CD14-positive monocyte (primary cell): ENCODE measurements at regions of chr4 and their contacts with region 1.

Region 1: GRCh38 chr4:165207431-165208220 is at the start of gene KLHL2:
- DNase-seq: peak; percentile 84 to 89 (median 88)
- H3K4me3 ChIP-seq: peak within 1 kb of the TSS; percentile 75 to 99 (median 91)
- H3K4me3 Mint-ChIP-seq: peak within 1 kb of the TSS; percentile 92 to 93
- H3K27ac ChIP-seq: peak within 1 kb of the TSS; percentile 56 to 89
- H3K27ac Mint-ChIP-seq: peak within 1 kb of the TSS; percentile 89 to 95 (median 93)
- H3K4me1 ChIP-seq: peaks cover 55 to 62% of the 10 kb centered on the region in 2 donors
- H3K4me1 Mint-ChIP-seq: peaks cover 66% of the 10 kb centered on the region
- H3K27me3 ChIP-seq: no peaks in the 10 kb centered on the region
- H3K27me3 Mint-ChIP-seq: peaks cover 0 to 6% (median 0%) of the 10 kb centered on the region in 3 donors
- CTCF ChIP-seq: no peak
- polyA plus RNA-seq, gene KLHL2: 6.9 to 22.6 (median 11.1) TPM

Region 2: GRCh38 chr4:165112368-165113139 is 95.1 kb before region 1 on chr4 and contains the start of gene TMEM192:
- intact Hi-C with region 1: loop called in 1 of 2 experiments (anchors 5 kb)
- DNase-seq: peak; percentile 74 to 85 (median 82)
- H3K4me3 ChIP-seq: peak within 1 kb of the TSS; percentile 74 to 96 (median 82)
- H3K4me3 Mint-ChIP-seq: peak within 1 kb of the TSS; percentile 93 to 98
- H3K27ac ChIP-seq: peak within 1 kb of the TSS; percentile 69 to 90
- H3K27ac Mint-ChIP-seq: peak within 1 kb of the TSS; percentile 88 to 98 (median 96)
- H3K4me1 ChIP-seq: peaks cover 10 to 18% of the 10 kb centered on the region in 2 donors
- H3K4me1 Mint-ChIP-seq: peaks cover 16% of the 10 kb centered on the region
- H3K27me3 ChIP-seq: no peaks in the 10 kb centered on the region
- H3K27me3 Mint-ChIP-seq: peaks cover 0 to 4% (median 0%) of the 10 kb centered on the region in 3 donors
- CTCF ChIP-seq: no peak
- polyA plus RNA-seq, gene TMEM192: 7.3 to 22.4 (median 15.5) TPM

Region 3: DNA sequence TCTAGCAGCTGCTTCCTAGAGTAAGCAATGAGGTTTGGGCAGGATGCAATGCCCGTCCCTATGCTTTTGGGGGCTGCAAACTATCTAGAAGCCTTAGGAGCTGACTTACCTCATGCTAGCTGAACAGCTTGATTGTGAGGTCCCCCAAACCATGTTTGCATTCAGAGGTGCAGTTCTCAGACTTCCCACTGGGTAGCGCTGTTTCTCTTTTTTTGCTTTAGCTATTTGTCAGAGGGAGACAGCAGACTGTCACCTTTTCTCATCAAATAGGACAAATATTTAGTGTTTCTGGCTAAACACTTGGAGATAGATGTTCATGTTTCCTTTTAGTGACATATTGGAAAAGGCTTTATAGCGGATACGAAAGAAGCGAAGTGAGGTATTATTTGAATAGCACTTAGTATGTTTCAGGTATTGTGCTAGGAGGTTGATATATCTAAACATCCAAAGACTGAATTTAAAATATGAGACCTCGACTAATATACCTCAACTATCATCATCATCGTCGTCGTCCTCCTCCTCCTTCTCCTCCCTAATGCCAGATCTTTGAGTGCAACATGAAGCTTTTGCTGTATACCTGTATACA is 76.3 kb before region 1 on chr4:
- intact Hi-C with region 1: loop called (anchors 5 to 10 kb)
- DNase-seq: peak; percentile 53 to 74 (median 60)
- H3K4me3 ChIP-seq: no peak overlapping the region
- H3K4me3 Mint-ChIP-seq: no peak overlapping the region
- H3K27ac ChIP-seq: no peak overlapping the region
- H3K27ac Mint-ChIP-seq: peak overlapping the region in 5 of 7 donors; percentile 26 to 64 (median 30)
- H3K4me1 ChIP-seq: peaks cover 30 to 40% of the 10 kb centered on the region in 2 donors
- H3K4me1 Mint-ChIP-seq: peaks cover 37% of the 10 kb centered on the region
- H3K27me3 ChIP-seq: no peaks in the 10 kb centered on the region
- H3K27me3 Mint-ChIP-seq: peaks cover 1 to 4% (median 2%) of the 10 kb centered on the region in 3 donors
- CTCF ChIP-seq: peak; percentile 93

Region 4: DNA sequence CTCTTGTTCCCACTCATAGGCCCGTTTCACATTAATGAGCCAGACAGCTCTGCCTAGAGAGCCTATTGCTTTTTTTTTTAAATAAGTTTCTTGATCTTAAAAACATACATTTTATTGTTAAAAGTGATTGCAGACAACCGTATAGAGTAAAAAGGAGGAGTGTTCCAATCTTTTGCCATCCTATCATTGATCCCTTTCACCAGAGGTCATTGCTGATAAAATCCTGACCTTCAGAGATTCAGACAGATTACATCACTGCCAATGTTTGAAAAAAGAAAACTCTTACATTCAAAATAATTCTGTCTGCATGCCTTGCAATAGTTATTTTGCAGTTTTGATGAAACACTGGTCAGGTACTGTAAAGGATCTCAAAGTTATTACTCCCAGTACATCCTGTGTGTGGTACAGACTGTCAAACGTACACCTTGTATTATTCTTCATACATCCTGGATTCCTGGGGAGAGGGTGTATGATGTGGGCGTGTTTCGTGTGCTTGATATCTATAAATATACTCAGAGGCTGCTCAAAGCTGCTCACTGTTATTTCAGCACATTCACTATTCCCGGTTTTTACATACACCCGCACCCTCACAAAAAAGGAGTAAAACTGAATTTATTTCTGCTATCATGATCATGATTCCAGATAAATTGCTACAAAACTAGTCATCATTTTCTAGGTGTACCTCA is 15.7 kb before region 1 on chr4:
- intact Hi-C with region 1: no loop called
- DNase-seq: no peak
- H3K4me3 ChIP-seq: no peak overlapping the region
- H3K4me3 Mint-ChIP-seq: no peak overlapping the region
- H3K27ac ChIP-seq: no peak overlapping the region
- H3K27ac Mint-ChIP-seq: no peak overlapping the region
- H3K4me1 ChIP-seq: no peaks in the 10 kb centered on the region
- H3K4me1 Mint-ChIP-seq: no peaks in the 10 kb centered on the region
- H3K27me3 ChIP-seq: no peaks in the 10 kb centered on the region
- H3K27me3 Mint-ChIP-seq: no peaks in the 10 kb centered on the region
- CTCF ChIP-seq: no peak

Region 5: DNA sequence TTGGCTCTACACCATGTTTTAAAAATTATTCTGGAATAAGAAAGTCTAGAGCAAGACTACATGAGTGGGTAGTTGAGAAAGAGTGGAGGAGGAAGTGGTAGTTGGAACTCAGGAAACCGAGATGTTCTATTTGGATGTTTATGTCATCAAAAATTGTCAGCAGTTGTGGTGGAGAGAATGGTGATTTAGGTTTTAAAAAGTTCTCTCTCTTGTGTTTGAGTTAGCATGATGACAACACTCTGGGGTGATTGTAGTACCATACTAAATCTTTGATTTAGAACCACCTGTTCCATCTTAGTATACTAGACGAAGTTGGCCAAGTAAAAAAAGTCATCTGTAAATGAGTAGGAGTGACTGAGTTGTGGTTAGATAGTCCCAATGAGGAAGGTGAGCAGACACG is 40.5 kb after region 1 on chr4:
- intact Hi-C with region 1: loop called in 1 of 2 experiments (anchors 10 kb)
- DNase-seq: peak; percentile 18 to 61 (median 44)
- H3K4me3 ChIP-seq: peak overlapping the region in 1 of 3 experiments; percentile 51
- H3K4me3 Mint-ChIP-seq: no peak overlapping the region
- H3K27ac ChIP-seq: peak overlapping the region in 1 of 2 donors; percentile 76
- H3K27ac Mint-ChIP-seq: no peak overlapping the region
- H3K4me1 ChIP-seq: peaks cover 18 to 25% of the 10 kb centered on the region in 2 donors
- H3K4me1 Mint-ChIP-seq: peaks cover 8% of the 10 kb centered on the region
- H3K27me3 ChIP-seq: no peaks in the 10 kb centered on the region
- H3K27me3 Mint-ChIP-seq: no peaks in the 10 kb centered on the region
- CTCF ChIP-seq: no peak

Region 6: GRCh38 chr4:165327211-165328100 is 119.8 kb after region 1 on chr4 and contains the start of gene MSMO1:
- intact Hi-C with region 1: loop called (anchors 10 kb)
- DNase-seq: peak; percentile 97 to 98 (median 98)
- H3K4me3 ChIP-seq: peak within 1 kb of the TSS; percentile 87 to 99 (median 90)
- H3K4me3 Mint-ChIP-seq: no peak within 1 kb of the TSS
- H3K27ac ChIP-seq: peak within 1 kb of the TSS; percentile 60 to 86
- H3K27ac Mint-ChIP-seq: peak within 1 kb of the TSS in 1 of 7 donors; percentile 48
- H3K4me1 ChIP-seq: peaks cover 24 to 27% of the 10 kb centered on the region in 2 donors
- H3K4me1 Mint-ChIP-seq: peaks cover 30% of the 10 kb centered on the region
- H3K27me3 ChIP-seq: no peaks in the 10 kb centered on the region
- H3K27me3 Mint-ChIP-seq: no peaks in the 10 kb centered on the region
- CTCF ChIP-seq: no peak
- polyA plus RNA-seq, gene MSMO1: 3.1 to 7.6 (median 6.0) TPM